ENCODE measurements at regions of chr16 and their contacts with region 1.

Region 1: GRCh38 chr16:78099372-78100161 is at the start of gene WWOX:
- DNase-seq: peak; percentile 91 to 95
- ATAC-seq: peak; percentile 95 to 97
- H3K4me3 ChIP-seq: peak within 1 kb of the TSS; percentile 79 to 93 (median 92)
- H3K27ac ChIP-seq: peak within 1 kb of the TSS; percentile 83 to 90 (median 86)
- H3K4me1 ChIP-seq: peaks cover 5 to 6% of the 10 kb centered on the region in 2 donors
- H3K27me3 ChIP-seq: no peaks in the 10 kb centered on the region
- CTCF ChIP-seq: peak; percentile 63 to 90 (median 80)
- POLR2A ChIP-seq: peak; percentile 33 to 60
- total RNA-seq, gene WWOX: 3.3 to 13.0 (median 6.0) TPM

Region 2: DNA sequence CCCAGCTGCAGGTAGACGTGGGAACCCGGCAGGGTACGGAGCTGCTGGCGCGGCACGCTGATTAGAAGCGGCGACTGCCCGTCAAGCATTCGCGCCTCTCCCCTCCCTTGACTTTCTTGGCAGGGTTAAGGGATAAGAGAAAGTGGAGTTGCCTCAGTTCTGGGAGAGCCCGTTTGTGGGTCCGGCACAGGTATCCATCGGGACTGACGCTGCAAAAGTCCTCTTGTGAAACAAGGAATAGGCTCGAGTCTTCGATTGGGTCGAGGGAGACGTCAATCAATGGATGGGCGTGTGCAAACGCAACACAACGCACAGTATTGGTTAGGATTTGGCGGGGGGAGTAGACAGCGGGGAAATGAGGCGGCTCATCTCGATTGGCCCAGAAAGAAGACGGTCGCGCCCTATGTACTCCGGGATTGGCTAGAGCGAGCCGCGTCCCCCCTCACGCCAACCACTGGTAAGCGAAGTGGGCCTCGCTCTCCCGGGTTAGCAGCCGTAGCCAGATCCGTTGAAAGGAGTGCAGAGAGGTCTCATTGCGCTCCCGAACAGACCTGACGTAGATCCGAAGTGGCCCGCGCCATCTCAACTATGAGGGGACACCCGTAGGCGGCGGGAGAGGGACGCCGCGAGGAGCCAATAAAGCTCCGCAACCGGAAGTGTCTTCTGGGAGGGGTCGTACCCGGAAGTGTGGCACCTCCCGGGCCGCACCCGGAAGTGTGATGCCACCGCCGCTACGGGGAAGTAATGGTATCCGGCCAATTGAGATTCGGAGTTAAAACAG is 908.9 kb before region 1 on chr16 and contains the start of gene MON1B:
- in situ Hi-C with region 1: no loop called
- intact Hi-C with region 1: loop called (anchors 1 kb)
- DNase-seq: peak; percentile 98 to 99
- ATAC-seq: peak; percentile 98
- H3K4me3 ChIP-seq: peak within 1 kb of the TSS; percentile 80 to 93 (median 90)
- H3K27ac ChIP-seq: peak within 1 kb of the TSS; percentile 93 to 96 (median 95)
- H3K4me1 ChIP-seq: peaks cover 12 to 15% of the 10 kb centered on the region in 2 donors
- H3K27me3 ChIP-seq: no peaks in the 10 kb centered on the region
- CTCF ChIP-seq: no peak
- POLR2A ChIP-seq: peak; percentile 48 to 72
- total RNA-seq, gene MON1B: 6.6 to 14.6 (median 10.6) TPM

Region 3: DNA sequence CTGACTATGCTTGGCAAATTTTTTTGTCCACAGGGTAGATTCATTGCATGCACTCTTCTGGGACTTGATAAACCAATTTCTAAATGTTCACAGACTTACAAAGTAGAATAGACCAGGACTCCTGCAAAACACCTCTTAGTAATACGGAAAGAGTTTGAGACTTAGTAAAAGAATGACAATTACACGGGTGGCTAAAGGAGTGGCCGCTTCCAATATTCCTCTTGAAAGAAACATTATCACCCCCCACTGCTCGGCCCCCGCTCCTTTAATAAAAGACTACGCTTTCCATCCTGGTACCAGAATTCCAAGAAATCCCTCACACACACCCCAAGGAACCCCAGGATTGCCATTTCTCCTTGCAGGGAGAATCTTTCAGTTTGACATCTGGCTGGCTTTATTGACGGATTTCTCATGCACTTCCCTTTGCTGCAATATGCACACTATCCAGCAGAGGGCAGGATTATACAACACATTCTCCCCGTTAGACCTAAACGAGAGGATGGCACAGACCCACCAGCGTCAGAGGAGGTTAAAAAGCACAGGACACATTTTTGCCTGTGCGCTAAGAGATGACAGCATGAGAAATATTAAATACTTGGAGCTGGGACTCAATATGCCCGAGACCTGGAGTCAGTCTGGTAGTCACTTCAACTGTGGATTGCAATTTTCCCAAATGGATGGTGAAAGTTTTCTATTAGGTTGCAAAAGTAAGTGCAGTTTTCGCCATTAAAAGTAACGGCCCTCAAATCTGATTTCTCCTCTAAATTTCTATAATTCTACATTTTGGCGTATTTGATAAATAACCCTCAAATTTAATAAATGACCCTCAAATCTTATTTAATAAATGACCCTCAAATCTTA is 423.9 kb before region 1 on chr16:
- in situ Hi-C with region 1: no loop called
- intact Hi-C with region 1: loop called (anchors 2 kb)
- DNase-seq: peak; percentile 11 to 35
- ATAC-seq: peak in 1 of 2 donors; percentile 73
- H3K4me3 ChIP-seq: no peak overlapping the region
- H3K27ac ChIP-seq: no peak overlapping the region
- H3K4me1 ChIP-seq: no peaks in the 10 kb centered on the region
- H3K27me3 ChIP-seq: no peaks in the 10 kb centered on the region
- CTCF ChIP-seq: peak; percentile 76 to 93 (median 85)
- POLR2A ChIP-seq: no peak

Region 4: GRCh38 chr16:77722309-77723107 is 377.1 kb before region 1 on chr16 and contains the start of gene NUDT7:
- in situ Hi-C with region 1: no loop called
- intact Hi-C with region 1: loop called (anchors 5 kb)
- DNase-seq: peak; percentile 96 to 97
- ATAC-seq: peak; percentile 98 to 99
- H3K4me3 ChIP-seq: peak within 1 kb of the TSS; percentile 71 to 99 (median 84)
- H3K27ac ChIP-seq: peak within 1 kb of the TSS; percentile 85 to 87 (median 86)
- H3K4me1 ChIP-seq: peaks cover 5 to 6% of the 10 kb centered on the region in 2 donors
- H3K27me3 ChIP-seq: no peaks in the 10 kb centered on the region
- CTCF ChIP-seq: no peak
- POLR2A ChIP-seq: peak; percentile 38 to 40
- total RNA-seq, gene NUDT7: 2.3 to 11.0 (median 3.4) TPM

Region 5: GRCh38 chr16:78770353-78771091 is 671.0 kb after region 1 on chr16:
- in situ Hi-C with region 1: loop called in 2 of 4 experiments (anchors 25 kb)
- intact Hi-C with region 1: no loop called
- DNase-seq: peak; percentile 33 to 58
- ATAC-seq: peak; percentile 58 to 79
- H3K4me3 ChIP-seq: no peak overlapping the region
- H3K27ac ChIP-seq: no peak overlapping the region
- H3K4me1 ChIP-seq: peaks cover 3 to 13% of the 10 kb centered on the region in 2 donors
- H3K27me3 ChIP-seq: no peaks in the 10 kb centered on the region
- CTCF ChIP-seq: peak; percentile 66 to 93 (median 85)
- POLR2A ChIP-seq: no peak

Region 6: GRCh38 chr16:78796221-78796866 is 696.8 kb after region 1 on chr16:
- in situ Hi-C with region 1: loop called in 1 of 4 experiments (anchors 25 kb)
- intact Hi-C with region 1: no loop called
- DNase-seq: peak in 1 of 2 donors; percentile 60
- ATAC-seq: peak; percentile 73 to 96
- H3K4me3 ChIP-seq: no peak overlapping the region
- H3K27ac ChIP-seq: peak overlapping the region in 1 of 4 donors; percentile 61
- H3K4me1 ChIP-seq: no peaks in the 10 kb centered on the region
- H3K27me3 ChIP-seq: no peaks in the 10 kb centered on the region
- CTCF ChIP-seq: no peak
- POLR2A ChIP-seq: no peak

Measured in gastrocnemius medialis (tissue), 4 donors.